GM12878 (cell line): ENCODE measurements at regions of chr12 and their contacts with region 1.

Region 1: DNA sequence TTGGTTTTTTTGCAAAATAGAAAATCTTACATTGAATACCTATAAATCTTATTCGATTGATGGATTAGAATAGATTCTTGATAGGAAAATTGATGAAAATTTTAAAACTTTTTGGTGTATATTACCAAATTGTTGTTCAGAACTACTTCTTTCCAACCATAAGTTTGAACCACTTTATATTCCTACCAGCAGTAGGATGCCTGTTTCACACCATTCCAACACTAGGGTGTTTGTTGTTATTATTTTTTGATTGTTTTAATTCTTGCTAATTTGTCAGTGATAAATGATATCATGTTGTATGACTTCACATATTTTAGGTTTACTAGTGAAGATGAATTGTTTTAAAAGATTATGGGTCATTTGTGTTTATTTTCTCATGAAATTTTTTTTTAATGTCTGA is 43.4 kb downstream of the UTP20 start:
- DNase-seq: no peak
- ATAC-seq: no peak
- H3K4me3 ChIP-seq: no peak overlapping the region
- H3K27ac ChIP-seq: no peak overlapping the region
- H3K4me1 ChIP-seq: no peaks in the 10 kb centered on the region
- H3K27me3 ChIP-seq: no peaks in the 10 kb centered on the region
- CTCF ChIP-seq: no peak
- EP300 ChIP-seq: no peak
- POLR2A ChIP-seq: no peak
- RAD21 ChIP-seq: no peak

Region 2: GRCh38 chr12:100827901-100828520 is 495.2 kb before region 1 on chr12:
- CTCF ChIA-PET with region 1: interaction called, 23 read pairs
- POLR2A ChIA-PET with region 1: no interaction called
- RAD21 ChIA-PET with region 1: interaction called, 7 read pairs
- SMC1A ChIA-PET with region 1: interaction called, 11 read pairs
- in situ Hi-C with region 1: loop called (anchors 5 kb)
- intact Hi-C with region 1: loop called (anchors 1 kb)
- DNase-seq: no peak
- ATAC-seq: peak; percentile 63
- H3K4me3 ChIP-seq: no peak overlapping the region
- H3K27ac ChIP-seq: no peak overlapping the region
- H3K4me1 ChIP-seq: no peaks in the 10 kb centered on the region
- H3K27me3 ChIP-seq: no peaks in the 10 kb centered on the region
- CTCF ChIP-seq: peak; percentile 64 to 78 (median 74)
- EP300 ChIP-seq: no peak
- POLR2A ChIP-seq: no peak
- RAD21 ChIP-seq: peak; percentile 85

Region 3: DNA sequence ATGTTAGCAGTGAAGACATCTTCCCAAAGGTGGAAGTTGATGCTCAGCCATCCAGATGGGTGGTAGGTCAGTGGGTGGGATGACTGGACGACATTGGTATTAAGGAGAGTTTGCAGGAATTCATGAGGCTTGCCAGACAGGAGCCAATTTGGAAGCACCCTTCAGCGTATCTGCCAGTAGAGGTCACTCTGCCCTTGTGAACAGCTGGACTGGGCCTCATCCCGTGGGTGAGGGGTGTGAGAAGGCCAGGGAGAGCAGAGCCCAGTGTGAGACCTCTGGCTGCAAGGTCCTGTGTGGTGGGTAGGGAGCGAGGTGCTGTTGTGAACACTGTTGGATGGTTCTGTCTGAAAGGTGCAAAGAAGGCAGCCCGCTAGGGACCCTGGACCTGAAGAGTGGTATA is 150.9 kb before region 1 on chr12:
- CTCF ChIA-PET with region 1: interaction called, 8 read pairs
- POLR2A ChIA-PET with region 1: no interaction called
- RAD21 ChIA-PET with region 1: no interaction called
- SMC1A ChIA-PET with region 1: interaction called, 3 read pairs
- in situ Hi-C with region 1: no loop called
- intact Hi-C with region 1: loop called (anchors 10 kb)
- DNase-seq: no peak
- ATAC-seq: peak; percentile 45; the same call in 1 of the 3 replicates
- H3K4me3 ChIP-seq: no peak overlapping the region
- H3K27ac ChIP-seq: no peak overlapping the region
- H3K4me1 ChIP-seq: no peaks in the 10 kb centered on the region
- H3K27me3 ChIP-seq: no peaks in the 10 kb centered on the region
- CTCF ChIP-seq: peak; percentile 4 to 17 (median 8); a peak in 1 of 6 replicates
- EP300 ChIP-seq: no peak
- POLR2A ChIP-seq: no peak
- RAD21 ChIP-seq: 0 out of 2 replicates have a peak, but pooled peaks have one; percentile 27

Region 4: GRCh38 chr12:101336437-101336836 is 13.2 kb after region 1 on chr12:
- CTCF ChIA-PET with region 1: interaction called, 14 read pairs
- POLR2A ChIA-PET with region 1: no interaction called
- RAD21 ChIA-PET with region 1: no interaction called
- SMC1A ChIA-PET with region 1: interaction called, 4 read pairs
- in situ Hi-C with region 1: no loop called
- intact Hi-C with region 1: no loop called
- DNase-seq: no peak
- ATAC-seq: no peak
- H3K4me3 ChIP-seq: no peak overlapping the region
- H3K27ac ChIP-seq: no peak overlapping the region
- H3K4me1 ChIP-seq: no peaks in the 10 kb centered on the region
- H3K27me3 ChIP-seq: no peaks in the 10 kb centered on the region
- CTCF ChIP-seq: no peak
- EP300 ChIP-seq: no peak
- POLR2A ChIP-seq: no peak
- RAD21 ChIP-seq: no peak

Region 5: GRCh38 chr12:101430456-101430855 is 107.2 kb after region 1 on chr12:
- CTCF ChIA-PET with region 1: no interaction called
- POLR2A ChIA-PET with region 1: no interaction called
- RAD21 ChIA-PET with region 1: no interaction called
- SMC1A ChIA-PET with region 1: no interaction called
- in situ Hi-C with region 1: no loop called
- intact Hi-C with region 1: no loop called
- DNase-seq: no peak
- ATAC-seq: no peak
- H3K4me3 ChIP-seq: no peak overlapping the region
- H3K27ac ChIP-seq: no peak overlapping the region
- H3K4me1 ChIP-seq: no peaks in the 10 kb centered on the region
- H3K27me3 ChIP-seq: no peaks in the 10 kb centered on the region
- CTCF ChIP-seq: no peak
- EP300 ChIP-seq: no peak
- POLR2A ChIP-seq: no peak
- RAD21 ChIP-seq: no peak

Region 6: DNA sequence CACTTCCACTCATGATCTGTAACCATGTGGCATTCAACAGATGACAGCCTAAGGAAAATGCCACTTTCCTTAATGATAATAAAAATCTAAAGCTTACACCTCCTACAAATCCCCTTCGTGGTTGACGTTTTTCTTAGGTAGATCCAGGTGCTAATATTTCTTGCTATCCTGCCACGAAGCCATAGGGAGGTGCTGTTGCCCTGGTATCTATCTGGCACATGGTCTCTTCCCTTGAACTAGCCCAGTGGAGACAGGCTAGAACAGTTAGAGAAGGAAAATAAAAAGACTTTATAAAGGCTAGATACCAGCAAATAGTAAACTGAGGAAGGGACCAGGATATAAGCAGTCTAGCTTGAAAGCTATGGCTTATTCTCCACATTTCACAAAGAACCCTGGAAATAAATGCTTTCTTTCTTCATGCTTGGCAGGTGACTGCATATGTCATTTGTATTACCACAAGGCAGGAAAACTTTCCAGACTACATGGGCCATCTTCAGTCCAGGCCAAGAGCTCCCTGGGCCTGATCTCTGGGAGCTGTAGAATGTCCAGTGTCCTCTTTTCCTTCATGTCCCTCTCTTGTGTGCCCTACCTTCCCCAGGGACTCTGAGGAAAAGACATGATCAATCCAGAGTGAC is 167.1 kb after region 1 on chr12:
- CTCF ChIA-PET with region 1: no interaction called
- POLR2A ChIA-PET with region 1: no interaction called
- RAD21 ChIA-PET with region 1: no interaction called
- SMC1A ChIA-PET with region 1: no interaction called
- in situ Hi-C with region 1: no loop called
- intact Hi-C with region 1: no loop called
- DNase-seq: no peak
- ATAC-seq: peak; percentile 84
- H3K4me3 ChIP-seq: no peak overlapping the region
- H3K27ac ChIP-seq: no peak overlapping the region
- H3K4me1 ChIP-seq: no peaks in the 10 kb centered on the region
- H3K27me3 ChIP-seq: no peaks in the 10 kb centered on the region
- CTCF ChIP-seq: peak; percentile 44 to 52 (median 51)
- EP300 ChIP-seq: no peak
- POLR2A ChIP-seq: no peak
- RAD21 ChIP-seq: peak; percentile 74